ENCODE measurements at regions of chrX and their contacts with region 1.

Region 1: DNA sequence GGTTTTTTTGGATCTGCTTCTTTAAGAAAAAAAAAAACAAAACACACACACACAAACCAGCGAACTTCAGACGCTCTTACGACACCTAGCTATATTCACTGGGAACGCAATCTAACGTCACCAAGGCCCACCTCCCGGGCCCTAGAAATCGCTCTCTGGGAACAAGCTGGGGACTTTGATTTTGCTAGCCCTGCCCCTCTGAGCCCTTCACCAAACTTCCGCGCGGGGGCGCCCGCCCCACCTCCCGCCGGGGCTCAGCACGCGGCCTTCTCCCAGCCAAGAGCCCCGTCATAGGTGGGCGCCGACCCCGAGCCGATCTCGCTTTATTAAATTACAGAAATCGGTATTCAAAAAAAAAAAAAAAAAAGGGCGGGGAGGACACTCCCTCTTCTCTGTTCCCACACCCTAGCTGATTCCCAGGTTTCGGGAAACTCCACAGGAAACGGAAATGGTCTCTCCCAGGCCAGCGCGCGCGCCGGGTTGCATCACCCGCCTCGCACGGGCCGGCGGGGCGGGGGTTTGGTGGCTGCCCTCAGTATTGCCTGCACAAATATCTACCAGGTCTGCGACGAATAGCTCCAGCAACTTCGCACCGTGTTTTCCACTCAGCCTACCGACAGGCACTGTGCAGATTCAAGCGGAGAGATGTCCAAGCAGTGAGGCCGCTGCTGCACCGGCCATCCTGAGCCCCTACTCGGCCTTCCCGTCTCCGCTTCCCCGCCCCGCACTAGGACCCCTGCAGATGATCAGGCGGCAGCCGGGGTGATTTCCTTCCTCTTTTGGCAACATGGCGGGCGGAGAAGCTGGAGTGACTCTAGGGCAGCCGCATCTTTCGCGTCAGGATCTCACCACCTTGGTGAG is at the start of gene EIF2S3:
- DNase-seq: peak; percentile 67 to 93 (median 89)
- H3K4me3 ChIP-seq: peak within 1 kb of the TSS in 39 of 59 donors; percentile 48 to 96 (median 79)
- H3K27ac ChIP-seq: peak within 1 kb of the TSS; percentile 18 to 98 (median 93)
- H3K27me3 ChIP-seq: peaks cover 0 to 4% (median 0%) of the 10 kb centered on the region in 45 donors
- CTCF ChIP-seq: peak; percentile 35 to 88 (median 71)
- total RNA-seq, gene EIF2S3: 71.5 to 135 (median 93.3) TPM

Region 2: GRCh38 chrX:23782863-23783568 is 271.4 kb before region 1 on chrX and contains the start of gene SAT1:
- intact Hi-C with region 1: loop called in 1 of 2 experiments (anchors 5 kb)
- DNase-seq: peak; percentile 92 to 96 (median 94)
- H3K4me3 ChIP-seq: peak within 1 kb of the TSS; percentile 45 to 87 (median 71)
- H3K27ac ChIP-seq: peak within 1 kb of the TSS in 58 of 59 donors; percentile 41 to 95 (median 87)
- H3K27me3 ChIP-seq: peaks cover 0 to 10% (median 0%) of the 10 kb centered on the region in 45 donors
- CTCF ChIP-seq: peak; percentile 62 to 92 (median 81)
- total RNA-seq, gene SAT1: 115 to 388 (median 167) TPM

Region 3: DNA sequence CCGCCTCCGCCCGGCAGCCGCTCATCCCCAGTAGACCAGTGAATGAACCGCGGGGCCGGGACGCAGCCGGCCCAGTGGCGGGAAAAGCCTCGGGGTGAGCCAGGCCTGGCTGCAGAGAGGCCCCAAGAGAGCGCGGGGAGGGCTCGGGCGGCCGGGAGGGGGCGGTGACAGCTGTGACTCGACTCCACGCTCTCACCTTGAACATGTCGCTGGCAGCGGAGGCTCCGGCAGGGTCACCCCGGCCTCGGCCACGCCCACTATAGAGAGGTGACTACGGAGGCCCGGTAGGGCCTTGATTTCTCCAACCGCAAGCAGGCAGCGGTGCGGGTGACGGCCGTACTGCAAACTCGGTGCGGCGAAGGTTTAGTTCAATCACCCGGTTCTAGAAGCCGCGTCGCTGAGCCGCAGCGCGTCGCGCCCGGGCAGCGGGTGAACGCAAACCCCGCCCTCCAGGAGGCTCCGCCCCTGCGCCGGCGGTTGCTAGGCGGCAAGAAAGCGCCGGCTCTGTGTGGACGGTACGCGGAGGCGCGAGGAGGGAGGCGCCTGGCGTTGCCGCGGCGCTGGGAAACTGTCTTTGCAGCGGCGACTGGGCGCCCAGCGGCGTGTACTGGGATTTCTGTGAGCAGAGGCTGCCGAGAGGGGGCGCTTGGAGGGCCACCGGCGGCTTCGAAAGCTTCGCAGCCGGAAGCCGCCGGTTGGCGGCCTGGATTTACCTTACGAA is 146.8 kb before region 1 on chrX and contains the starts of genes APOO and CXorf58:
- intact Hi-C with region 1: loop called (anchors 2 kb)
- DNase-seq: peak; percentile 75 to 91 (median 86)
- H3K4me3 ChIP-seq: peak within 1 kb of the TSS; percentile 43 to 82 (median 65)
- H3K27ac ChIP-seq: peak within 1 kb of the TSS; percentile 32 to 92 (median 84)
- H3K27me3 ChIP-seq: peaks cover 0 to 37% (median 5%) of the 10 kb centered on the region in 45 donors
- CTCF ChIP-seq: peak; percentile 42 to 87 (median 77)
- total RNA-seq, gene APOO: 29.9 to 113 (median 77.0) TPM
- total RNA-seq, gene CXorf58: 0.26 to 1.4 (median 0.51) TPM in 19 of 120 experiments, not detected in the others

Region 4: DNA sequence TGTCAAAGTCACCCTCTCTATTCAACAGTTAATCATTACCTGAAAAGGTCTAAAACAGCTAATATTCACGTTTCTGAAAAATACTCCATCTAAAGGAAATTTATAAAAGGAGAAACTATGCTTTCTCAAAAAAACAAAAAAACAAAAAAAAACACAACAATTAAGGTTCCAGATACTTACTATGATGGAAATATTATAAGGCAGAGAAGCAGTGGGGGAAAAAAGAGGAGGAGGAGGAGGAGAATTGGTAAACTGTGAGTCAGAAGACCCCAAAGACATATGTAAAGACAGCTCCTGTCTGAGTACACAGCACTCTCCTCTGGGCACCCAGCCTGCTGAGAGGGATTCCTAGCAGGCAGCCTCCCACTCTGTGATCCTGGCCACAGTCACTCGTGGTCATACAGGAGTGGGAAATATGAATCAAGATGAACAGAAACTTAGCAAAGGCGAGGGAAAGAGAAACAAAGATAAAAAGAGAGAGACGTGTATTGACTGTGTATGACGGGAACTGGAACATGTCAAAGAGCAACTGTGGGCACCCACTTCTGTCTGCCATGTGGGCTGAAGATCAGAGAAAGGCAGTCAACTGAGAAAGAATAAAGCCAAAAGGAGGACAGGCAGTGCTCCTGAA is 39.9 kb before region 1 on chrX:
- intact Hi-C with region 1: no loop called
- DNase-seq: no peak
- H3K4me3 ChIP-seq: no peak overlapping the region
- H3K27ac ChIP-seq: no peak overlapping the region
- H3K27me3 ChIP-seq: peaks cover 0 to 81% (median 16%) of the 10 kb centered on the region in 45 donors
- CTCF ChIP-seq: no peak

Region 5: DNA sequence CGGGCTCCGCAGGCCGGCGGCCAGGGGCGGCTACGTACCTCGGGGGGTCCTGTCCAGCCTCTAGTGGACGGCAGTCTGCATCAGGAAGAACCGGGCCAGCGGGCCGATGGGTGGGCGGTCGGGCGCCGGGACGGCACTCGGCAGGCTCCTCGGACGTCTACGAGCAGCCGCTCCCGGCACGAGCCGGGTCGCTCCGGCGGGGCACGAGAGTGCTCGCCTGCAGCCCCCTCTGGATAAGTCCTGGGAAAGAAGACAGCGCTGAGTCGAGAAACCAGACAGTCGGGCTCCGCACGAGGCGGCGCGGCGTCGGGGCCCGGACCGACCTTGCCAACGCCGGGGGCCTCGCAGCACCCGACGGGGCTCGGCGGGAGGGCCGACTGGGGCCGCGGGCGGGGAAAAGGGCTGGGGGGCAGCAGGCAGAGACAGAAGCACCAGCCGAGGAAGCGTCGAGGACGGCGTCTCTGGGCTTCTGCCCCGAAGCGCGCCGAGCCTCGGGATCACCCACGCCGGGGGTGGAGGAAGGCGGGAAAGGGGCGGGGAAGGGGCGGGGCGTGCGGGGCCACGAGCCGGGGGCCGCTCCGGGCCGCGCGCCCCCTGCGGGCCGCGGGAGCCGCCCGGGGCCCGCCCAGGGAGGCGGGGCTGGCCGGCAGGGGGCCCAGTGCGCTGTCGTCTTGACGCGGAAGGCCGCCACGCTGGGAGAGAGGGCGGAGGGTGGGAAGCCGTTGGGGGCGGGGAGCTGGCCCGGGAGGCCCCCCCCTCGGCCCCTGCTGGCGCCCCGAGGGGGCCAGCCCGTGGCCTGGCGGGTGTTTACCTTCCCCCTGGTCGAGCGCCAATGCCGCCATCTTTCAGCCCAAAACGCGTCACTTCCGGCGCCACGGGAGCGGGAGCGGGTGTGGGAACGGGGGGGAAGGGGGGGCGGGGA is 29.3 kb before region 1 on chrX:
- intact Hi-C with region 1: loop called (anchors 1 kb)
- DNase-seq: peak; percentile 68 to 84 (median 74)
- H3K4me3 ChIP-seq: peak overlapping the region; percentile 48 to 85 (median 74)
- H3K27ac ChIP-seq: peak overlapping the region; percentile 49 to 95 (median 90)
- H3K27me3 ChIP-seq: peaks cover 0 to 40% (median 8%) of the 10 kb centered on the region in 45 donors
- CTCF ChIP-seq: peak in 30 of 56 donors; percentile 7 to 54 (median 30)

Region 6: GRCh38 chrX:24150051-24150790 is 95.8 kb after region 1 on chrX:
- intact Hi-C with region 1: loop called (anchors 1 to 10 kb)
- DNase-seq: peak; percentile 79 to 93 (median 90)
- H3K4me3 ChIP-seq: peak overlapping the region; percentile 43 to 99 (median 86)
- H3K27ac ChIP-seq: peak overlapping the region; percentile 92 to 100 (median 99)
- H3K27me3 ChIP-seq: no peaks in the 10 kb centered on the region
- CTCF ChIP-seq: peak in 54 of 56 donors; percentile 26 to 85 (median 66)

Measured in dorsolateral prefrontal cortex (tissue), 120 donors.